Sigmoid colon (tissue), 7 donors: ENCODE measurements at regions of chr1 and their contacts with region 1.

Region 1: DNA sequence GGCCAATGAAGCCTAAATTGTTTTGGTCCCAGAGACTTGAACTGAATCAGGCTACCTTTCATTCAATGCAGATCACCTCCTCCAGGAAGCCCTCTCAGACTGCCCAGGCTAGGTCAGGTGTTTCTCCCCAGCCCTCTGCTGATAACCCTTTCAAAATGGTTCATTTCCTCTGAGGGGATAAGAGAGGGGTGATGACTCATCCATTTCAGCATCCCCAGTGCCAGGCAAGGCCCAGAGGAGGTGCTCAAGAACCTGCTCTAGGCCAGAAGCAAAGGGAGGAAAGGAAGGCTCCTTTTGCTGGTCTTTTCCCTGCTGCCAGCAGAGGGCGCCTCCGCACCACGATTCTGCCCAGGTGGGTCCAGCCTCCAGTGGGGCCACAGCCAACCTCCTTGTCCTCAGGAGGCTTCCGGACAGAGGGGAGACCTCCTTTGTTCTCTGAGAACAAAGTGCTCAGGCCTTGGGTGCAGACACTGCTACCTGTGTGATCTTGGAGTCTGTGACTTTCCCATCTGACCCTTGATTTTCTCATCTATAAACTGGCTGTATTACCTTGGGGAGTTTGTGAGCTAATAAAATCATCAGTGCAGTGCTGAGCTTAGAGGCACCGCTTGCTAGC is 45.3 kb upstream of the ARHGEF10L start:
- DNase-seq: peak; percentile 83
- H3K4me3 ChIP-seq: no peak overlapping the region
- H3K27ac ChIP-seq: no peak overlapping the region
- H3K4me1 ChIP-seq: peaks cover 0 to 2% (median under 1%) of the 10 kb centered on the region in 4 donors
- H3K27me3 ChIP-seq: no peaks in the 10 kb centered on the region
- CTCF ChIP-seq: peak; percentile 70 to 86 (median 78)
- EP300 ChIP-seq: no peak
- POLR2A ChIP-seq: no peak

Region 2: DNA sequence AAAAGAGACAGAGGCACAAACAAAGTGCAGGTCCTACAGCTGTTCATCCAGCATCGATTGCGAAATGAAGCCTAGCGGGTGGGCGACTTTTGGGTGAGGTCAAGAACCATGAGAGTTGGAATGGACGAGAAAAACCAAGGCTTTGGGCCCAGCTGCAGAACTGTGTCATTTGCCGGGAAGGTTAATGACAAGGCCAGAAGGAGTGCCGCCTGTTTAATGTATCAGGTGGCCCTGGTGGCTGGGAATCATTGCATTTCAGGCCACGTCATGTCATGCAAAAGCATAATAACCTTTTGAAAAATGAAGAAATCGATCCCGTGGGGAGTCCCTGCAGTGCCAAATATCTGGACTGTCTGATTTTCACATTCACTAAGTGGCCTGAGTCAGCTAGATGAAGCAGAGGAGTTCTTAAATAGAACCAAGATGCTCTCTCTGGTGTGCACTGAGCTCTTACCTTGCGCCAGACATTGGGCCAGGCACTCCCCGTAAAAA is 46.7 kb before region 1 on chr1:
- intact Hi-C with region 1: no loop called
- DNase-seq: no peak
- H3K4me3 ChIP-seq: no peak overlapping the region
- H3K27ac ChIP-seq: no peak overlapping the region
- H3K4me1 ChIP-seq: no peaks in the 10 kb centered on the region
- H3K27me3 ChIP-seq: no peaks in the 10 kb centered on the region
- CTCF ChIP-seq: no peak
- EP300 ChIP-seq: no peak
- POLR2A ChIP-seq: no peak

Region 3: DNA sequence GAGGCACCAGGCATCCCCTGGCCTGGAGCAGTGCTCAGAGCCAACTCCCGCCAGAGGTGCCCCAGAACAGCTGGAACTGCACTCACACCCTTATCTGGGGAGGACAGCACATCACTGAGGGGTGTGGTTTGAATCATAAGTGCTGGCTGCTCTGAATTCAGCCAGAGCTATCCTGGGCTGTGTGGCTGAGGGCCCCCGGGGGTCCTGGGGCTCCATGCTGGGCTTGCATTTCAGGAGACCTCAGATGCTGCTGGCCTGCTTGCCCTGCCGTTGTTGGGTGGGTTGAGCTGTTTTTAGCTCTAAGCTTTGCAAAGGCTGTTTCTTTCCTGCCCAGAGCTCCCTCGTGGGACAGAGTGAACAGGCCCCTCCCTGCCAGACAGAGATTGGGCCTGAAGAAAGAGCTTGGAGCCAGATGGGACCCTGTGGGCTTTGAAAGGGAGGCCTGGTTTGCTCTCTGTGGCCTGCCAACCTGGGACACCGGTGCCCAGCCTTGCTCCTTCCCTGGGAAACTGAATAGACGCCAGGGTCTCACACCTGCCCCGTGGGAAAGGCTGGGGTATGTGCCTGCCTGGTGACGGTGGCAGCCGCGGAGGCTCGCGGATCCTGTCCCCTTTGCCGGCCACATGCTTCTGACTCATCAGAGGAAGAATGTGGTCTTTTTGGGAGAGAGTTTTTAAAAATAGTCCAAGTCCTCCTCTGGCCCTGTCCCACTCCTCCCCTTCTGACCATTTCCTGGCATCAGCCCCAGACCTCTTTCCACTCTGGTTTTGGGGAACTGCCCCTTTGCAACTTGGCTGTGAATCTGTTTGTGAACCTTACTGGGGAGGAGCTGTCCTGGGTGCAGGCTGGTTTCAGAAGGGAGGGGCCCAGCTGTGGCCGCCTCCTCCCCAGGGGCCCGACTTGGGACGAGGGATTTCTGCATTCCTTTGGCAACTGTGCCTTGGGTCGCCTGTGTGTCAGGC is 75.3 kb after region 1 on chr1:
- intact Hi-C with region 1: no loop called
- DNase-seq: peak; percentile 95
- H3K4me3 ChIP-seq: peak overlapping the region in 1 of 4 donors; percentile 10
- H3K27ac ChIP-seq: peak overlapping the region; percentile 75 to 97 (median 92)
- H3K4me1 ChIP-seq: peaks cover 0 to 100% (median 98%) of the 10 kb centered on the region in 4 donors
- H3K27me3 ChIP-seq: no peaks in the 10 kb centered on the region
- CTCF ChIP-seq: no peak
- EP300 ChIP-seq: peak in 1 of 4 donors; percentile 96
- POLR2A ChIP-seq: no peak

Region 4: GRCh38 chr1:17606826-17607440 is 112.7 kb after region 1 on chr1:
- intact Hi-C with region 1: loop called (anchors 2 kb)
- DNase-seq: peak; percentile 89
- H3K4me3 ChIP-seq: no peak overlapping the region
- H3K27ac ChIP-seq: peak overlapping the region; percentile 46 to 77 (median 68)
- H3K4me1 ChIP-seq: peaks cover 0 to 34% (median 20%) of the 10 kb centered on the region in 4 donors
- H3K27me3 ChIP-seq: no peaks in the 10 kb centered on the region
- CTCF ChIP-seq: peak; percentile 92 to 95 (median 93)
- EP300 ChIP-seq: no peak
- POLR2A ChIP-seq: no peak

Region 5: GRCh38 chr1:18100491-18101063 is 606.4 kb after region 1 on chr1:
- intact Hi-C with region 1: loop called (anchors 10 kb)
- DNase-seq: peak; percentile 72
- H3K4me3 ChIP-seq: no peak overlapping the region
- H3K27ac ChIP-seq: no peak overlapping the region
- H3K4me1 ChIP-seq: peaks cover 0 to 4% (median 0%) of the 10 kb centered on the region in 4 donors
- H3K27me3 ChIP-seq: peaks cover 0 to 16% (median 0%) of the 10 kb centered on the region in 3 donors
- CTCF ChIP-seq: peak; percentile 13 to 80 (median 74)
- EP300 ChIP-seq: no peak
- POLR2A ChIP-seq: no peak

Region 6: GRCh38 chr1:18575620-18576019 is 1081.4 kb after region 1 on chr1:
- intact Hi-C with region 1: loop called (anchors 10 kb)
- DNase-seq: peak; percentile 69
- H3K4me3 ChIP-seq: no peak overlapping the region
- H3K27ac ChIP-seq: no peak overlapping the region
- H3K4me1 ChIP-seq: no peaks in the 10 kb centered on the region
- H3K27me3 ChIP-seq: peaks cover 0 to 16% (median 6%) of the 10 kb centered on the region in 3 donors
- CTCF ChIP-seq: peak; percentile 26 to 49 (median 44)
- EP300 ChIP-seq: no peak
- POLR2A ChIP-seq: no peak